Activated B cell treated with CpG ODN at 0.5 μM for 24 hours (primary cell): ENCODE measurements at regions of chr2 and their contacts with region 1.

Region 1: GRCh38 chr2:101781326-101781725 is 83.8 kb downstream of the MAP4K4 start:
- DNase-seq: no peak
- ATAC-seq: peak; percentile 89
- H3K4me3 Mint-ChIP-seq: peak overlapping the region; percentile 69
- H3K27ac Mint-ChIP-seq: peak overlapping the region; percentile 87
- H3K4me1 Mint-ChIP-seq: peaks cover 95% of the 10 kb centered on the region
- H3K27me3 Mint-ChIP-seq: no peaks in the 10 kb centered on the region
- CTCF ChIP-seq: no peak

Region 2: DNA sequence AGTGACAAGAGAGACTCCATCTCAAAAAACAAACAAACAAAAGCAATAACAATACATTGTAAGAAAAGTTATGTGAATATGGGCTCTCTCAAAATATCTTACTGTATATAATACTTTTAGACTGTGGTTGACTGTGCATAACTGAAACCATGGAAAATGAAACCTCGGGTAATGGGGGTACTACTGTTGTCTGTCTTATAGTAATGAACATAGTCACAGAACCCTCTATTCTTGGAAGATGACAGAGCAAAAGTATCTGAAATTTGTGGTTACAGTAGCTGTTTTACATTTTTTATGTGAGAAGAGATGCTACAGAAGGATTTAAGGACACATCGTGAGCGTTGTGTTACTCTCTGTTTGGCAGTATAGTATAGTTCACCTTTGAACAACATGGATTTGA is 23.3 kb before region 1 on chr2:
- CTCF ChIA-PET with region 1: no interaction called
- POLR2A ChIA-PET with region 1: interaction called, 16 read pairs
- intact Hi-C with region 1: loop called (anchors 1 kb)
- DNase-seq: no peak
- ATAC-seq: no peak
- H3K4me3 Mint-ChIP-seq: peak overlapping the region; percentile 60
- H3K27ac Mint-ChIP-seq: peak overlapping the region; percentile 53
- H3K4me1 Mint-ChIP-seq: peaks cover 82% of the 10 kb centered on the region
- H3K27me3 Mint-ChIP-seq: no peaks in the 10 kb centered on the region
- CTCF ChIP-seq: no peak

Region 3: GRCh38 chr2:101796825-101797600 is 15.7 kb after region 1 on chr2:
- CTCF ChIA-PET with region 1: no interaction called
- POLR2A ChIA-PET with region 1: interaction called, 3 read pairs
- intact Hi-C with region 1: loop called (anchors 2 kb)
- DNase-seq: no peak
- ATAC-seq: peak; percentile 52
- H3K4me3 Mint-ChIP-seq: peak overlapping the region; percentile 6
- H3K27ac Mint-ChIP-seq: peak overlapping the region; percentile 59
- H3K4me1 Mint-ChIP-seq: peaks cover 76% of the 10 kb centered on the region
- H3K27me3 Mint-ChIP-seq: no peaks in the 10 kb centered on the region
- CTCF ChIP-seq: no peak

Region 4: DNA sequence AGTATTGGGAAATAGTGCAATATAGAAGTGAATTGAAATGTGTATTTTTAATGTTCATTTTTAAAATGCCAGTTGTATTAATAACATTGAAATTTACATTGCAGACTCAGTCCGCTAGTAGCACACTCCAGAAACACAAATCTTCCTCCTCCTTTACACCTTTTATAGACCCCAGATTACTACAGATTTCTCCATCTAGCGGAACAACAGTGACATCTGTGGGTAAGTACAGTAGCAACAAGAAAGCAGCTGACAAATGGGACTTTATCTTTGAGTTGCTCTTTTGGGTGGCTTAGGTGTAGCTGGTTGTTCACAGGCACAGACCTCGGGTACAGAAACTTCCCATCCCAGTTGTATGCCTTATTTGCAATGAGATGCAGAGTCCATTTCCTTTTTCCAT is 92.2 kb after region 1 on chr2:
- CTCF ChIA-PET with region 1: no interaction called
- POLR2A ChIA-PET with region 1: no interaction called
- intact Hi-C with region 1: no loop called
- DNase-seq: no peak
- ATAC-seq: no peak
- H3K4me3 Mint-ChIP-seq: no peak overlapping the region
- H3K27ac Mint-ChIP-seq: no peak overlapping the region
- H3K4me1 Mint-ChIP-seq: no peaks in the 10 kb centered on the region
- H3K27me3 Mint-ChIP-seq: no peaks in the 10 kb centered on the region
- CTCF ChIP-seq: no peak

Region 5: DNA sequence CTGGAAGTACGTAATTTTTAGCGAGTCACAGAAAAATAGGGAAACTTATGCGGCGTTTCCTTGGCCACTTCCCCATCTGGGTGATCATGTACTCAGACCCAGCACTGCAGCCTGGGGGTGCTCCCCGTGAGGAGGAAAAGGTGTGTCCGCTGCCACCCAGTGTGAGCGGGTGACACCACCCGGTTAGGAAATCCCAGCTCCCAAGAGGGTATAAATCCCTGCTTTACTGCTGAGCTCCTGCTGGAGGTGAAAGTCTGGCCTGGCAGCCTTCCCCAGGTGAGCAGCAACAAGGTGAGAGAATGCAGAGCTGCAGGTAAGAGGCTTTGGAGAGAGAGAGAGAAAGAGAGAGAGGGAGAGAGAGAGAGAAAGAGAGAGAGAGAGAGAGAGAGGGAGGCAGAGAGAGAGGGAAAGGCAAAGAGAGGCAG is 210.4 kb after region 1 on chr2 and contains the start of gene IL1R2:
- CTCF ChIA-PET with region 1: no interaction called
- POLR2A ChIA-PET with region 1: no interaction called
- intact Hi-C with region 1: no loop called
- DNase-seq: no peak
- ATAC-seq: peak; percentile 21
- H3K4me3 Mint-ChIP-seq: no peak within 1 kb of the TSS
- H3K27ac Mint-ChIP-seq: no peak within 1 kb of the TSS
- H3K4me1 Mint-ChIP-seq: peaks cover 27% of the 10 kb centered on the region
- H3K27me3 Mint-ChIP-seq: peaks cover 6% of the 10 kb centered on the region
- CTCF ChIP-seq: no peak
- total RNA-seq, gene IL1R2: not detected in 2 replicates